ENCODE measurements at regions of chr6 and their contacts with region 1.

Region 1: GRCh38 chr6:30044630-30045029 is 16.4 kb upstream of the POLR1H start:
- DNase-seq: no peak
- ATAC-seq: no peak; the same call in 2 of the 3 replicates
- H3K4me3 ChIP-seq: no peak overlapping the region
- H3K27ac ChIP-seq: no peak overlapping the region
- H3K4me1 ChIP-seq: peaks cover 15% of the 10 kb centered on the region
- H3K27me3 ChIP-seq: no peaks in the 10 kb centered on the region
- CTCF ChIP-seq: no peak
- EP300 ChIP-seq: no peak
- POLR2A ChIP-seq: no peak
- RAD21 ChIP-seq: no peak

Region 2: GRCh38 chr6:30061092-30061857 is 16.6 kb after region 1 on chr6 and contains the start of gene POLR1H:
- CTCF ChIA-PET with region 1: interaction called, 3 read pairs
- POLR2A ChIA-PET with region 1: interaction called, 8 read pairs
- RAD21 ChIA-PET with region 1: interaction called, 4 read pairs
- SMC1A ChIA-PET with region 1: interaction called, 11 read pairs
- in situ Hi-C with region 1: no loop called
- intact Hi-C with region 1: no loop called
- DNase-seq: peak; percentile 64
- ATAC-seq: peak; percentile 96
- H3K4me3 ChIP-seq: peak within 1 kb of the TSS; percentile 99
- H3K27ac ChIP-seq: peak within 1 kb of the TSS; percentile 84
- H3K4me1 ChIP-seq: peaks cover 5% of the 10 kb centered on the region; the same call in 1 of the 2 replicates
- H3K27me3 ChIP-seq: no peaks in the 10 kb centered on the region
- CTCF ChIP-seq: no peak
- EP300 ChIP-seq: 0 out of 4 replicates have a peak, but pooled peaks of 1 of the 2 experiments have one; percentile 44
- POLR2A ChIP-seq: no peak; the same call in none of the 2 replicates
- RAD21 ChIP-seq: no peak
- polyA plus RNA-seq, gene POLR1H: 154 to 160 TPM

Measured in GM12878 (cell line).